Activated B cell treated with CpG ODN at 0.5 μM for 24 hours (primary cell): ENCODE measurements at regions of chr3 and their contacts with region 1.

Region 1: DNA sequence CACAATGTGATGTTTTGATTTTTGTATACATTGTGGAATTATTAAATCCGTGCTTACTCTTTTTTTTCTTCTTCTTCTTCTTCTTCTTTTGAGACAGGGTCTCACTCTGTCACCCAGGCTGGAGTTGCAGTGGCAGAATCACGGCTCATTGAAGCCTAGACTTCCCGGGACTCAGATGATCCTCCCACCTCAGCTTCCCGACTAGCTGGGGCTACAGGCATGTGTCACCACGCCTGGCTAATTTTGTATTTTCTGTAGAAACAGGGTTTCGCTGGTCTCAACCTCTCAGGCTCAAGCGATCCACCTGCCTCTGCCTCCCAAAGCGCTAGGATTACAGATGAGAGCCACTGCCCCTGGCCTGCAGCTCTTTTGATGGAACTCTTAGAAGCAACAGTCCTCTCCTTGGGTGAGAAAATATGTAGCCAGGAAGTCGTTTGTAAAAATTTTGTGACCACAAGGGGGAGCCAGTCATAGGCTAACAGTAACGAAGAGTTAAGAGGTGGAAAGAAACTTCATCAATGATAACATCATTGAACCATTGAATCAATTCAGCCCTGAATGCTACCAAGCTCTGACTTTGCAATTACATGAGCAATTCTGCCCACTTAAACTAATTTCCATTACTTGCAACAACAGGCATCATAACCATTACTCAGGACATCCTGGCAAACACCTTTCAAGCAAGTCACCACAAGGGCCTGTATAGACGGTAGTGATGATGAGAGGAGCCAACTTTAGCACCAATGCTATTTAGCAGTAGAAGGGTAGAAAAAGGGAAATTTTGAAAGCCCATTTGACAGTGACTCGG is 16.7 kb upstream of the CMTM7 start:
- DNase-seq: peak; percentile 18
- ATAC-seq: peak; percentile 75
- H3K4me3 Mint-ChIP-seq: no peak overlapping the region
- H3K27ac Mint-ChIP-seq: peak overlapping the region; percentile 50
- H3K4me1 Mint-ChIP-seq: peaks cover 28% of the 10 kb centered on the region
- H3K27me3 Mint-ChIP-seq: no peaks in the 10 kb centered on the region
- CTCF ChIP-seq: no peak

Region 2: DNA sequence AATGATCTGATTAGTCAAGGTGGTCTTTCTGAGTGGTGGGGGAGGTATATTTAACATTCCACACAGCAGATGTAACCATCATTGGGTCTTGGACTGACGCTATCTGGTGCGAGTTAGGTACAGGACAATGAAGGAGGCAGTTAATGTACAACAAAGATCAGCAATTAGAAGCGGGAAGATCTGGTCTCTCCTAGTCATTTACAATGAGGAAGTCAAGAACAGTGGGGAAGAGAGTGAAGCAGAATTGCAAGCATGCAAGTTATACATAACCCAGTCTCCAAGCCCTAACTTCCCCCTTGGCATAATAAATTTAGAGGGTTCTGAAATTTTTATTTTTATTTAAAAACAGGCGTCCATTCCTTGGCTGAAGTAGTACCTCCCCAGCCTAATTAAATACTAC is 254.5 kb before region 1 on chr3:
- CTCF ChIA-PET with region 1: no interaction called
- POLR2A ChIA-PET with region 1: no interaction called
- intact Hi-C with region 1: no loop called
- DNase-seq: no peak
- ATAC-seq: no peak
- H3K4me3 Mint-ChIP-seq: no peak overlapping the region
- H3K27ac Mint-ChIP-seq: no peak overlapping the region
- H3K4me1 Mint-ChIP-seq: peaks cover 2% of the 10 kb centered on the region
- H3K27me3 Mint-ChIP-seq: no peaks in the 10 kb centered on the region
- CTCF ChIP-seq: no peak

Region 3: DNA sequence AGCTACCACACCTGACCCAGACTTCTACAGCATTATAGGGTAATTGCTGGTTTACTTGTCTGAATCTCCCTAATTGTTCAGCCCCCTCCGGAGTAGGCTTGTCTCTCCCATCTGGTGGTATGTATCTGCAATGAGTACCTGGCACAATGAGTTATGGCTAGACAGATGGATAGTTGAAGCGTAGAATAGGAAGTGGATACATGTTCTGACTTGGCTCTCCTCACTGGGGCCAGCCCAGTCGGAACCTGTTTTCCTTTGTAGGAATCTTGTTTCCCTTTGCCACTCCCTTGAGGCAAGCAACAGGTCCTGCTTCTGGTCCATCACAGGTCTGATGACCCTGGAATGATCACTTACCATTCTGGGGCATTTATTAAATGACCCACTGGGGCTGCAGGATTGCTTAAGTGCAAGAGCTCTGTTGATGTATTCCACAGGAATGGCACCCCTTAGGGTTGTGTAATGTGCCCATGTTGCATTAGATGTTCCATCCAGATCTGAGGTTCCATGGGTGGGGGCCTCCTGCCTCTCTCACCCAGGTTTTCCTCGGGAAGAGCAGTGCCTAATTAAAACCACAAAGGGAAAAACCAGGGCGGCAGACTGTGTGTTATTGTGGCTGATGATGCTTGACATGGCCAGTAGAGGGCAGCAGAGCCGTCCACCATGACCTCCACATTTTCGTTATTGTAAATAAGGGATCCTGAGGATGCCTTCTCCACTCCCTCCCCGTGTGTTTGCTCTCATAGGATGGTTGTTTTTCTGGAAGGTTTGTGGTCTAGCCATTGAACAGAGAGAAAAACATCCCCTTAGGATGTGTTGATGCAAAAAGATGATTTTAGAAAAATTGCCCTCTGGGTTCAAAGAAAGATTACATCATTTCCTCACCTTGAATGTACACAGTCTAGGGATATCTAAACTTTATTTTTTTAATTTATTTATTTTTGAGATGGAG is 78.5 kb before region 1 on chr3:
- CTCF ChIA-PET with region 1: interaction called, 7 read pairs
- POLR2A ChIA-PET with region 1: interaction called, 3 read pairs
- intact Hi-C with region 1: loop called (anchors 5 kb)
- DNase-seq: peak; percentile 40
- ATAC-seq: peak; percentile 82
- H3K4me3 Mint-ChIP-seq: no peak overlapping the region
- H3K27ac Mint-ChIP-seq: no peak overlapping the region
- H3K4me1 Mint-ChIP-seq: peaks cover 4% of the 10 kb centered on the region
- H3K27me3 Mint-ChIP-seq: no peaks in the 10 kb centered on the region
- CTCF ChIP-seq: peak; percentile 88

Region 4: DNA sequence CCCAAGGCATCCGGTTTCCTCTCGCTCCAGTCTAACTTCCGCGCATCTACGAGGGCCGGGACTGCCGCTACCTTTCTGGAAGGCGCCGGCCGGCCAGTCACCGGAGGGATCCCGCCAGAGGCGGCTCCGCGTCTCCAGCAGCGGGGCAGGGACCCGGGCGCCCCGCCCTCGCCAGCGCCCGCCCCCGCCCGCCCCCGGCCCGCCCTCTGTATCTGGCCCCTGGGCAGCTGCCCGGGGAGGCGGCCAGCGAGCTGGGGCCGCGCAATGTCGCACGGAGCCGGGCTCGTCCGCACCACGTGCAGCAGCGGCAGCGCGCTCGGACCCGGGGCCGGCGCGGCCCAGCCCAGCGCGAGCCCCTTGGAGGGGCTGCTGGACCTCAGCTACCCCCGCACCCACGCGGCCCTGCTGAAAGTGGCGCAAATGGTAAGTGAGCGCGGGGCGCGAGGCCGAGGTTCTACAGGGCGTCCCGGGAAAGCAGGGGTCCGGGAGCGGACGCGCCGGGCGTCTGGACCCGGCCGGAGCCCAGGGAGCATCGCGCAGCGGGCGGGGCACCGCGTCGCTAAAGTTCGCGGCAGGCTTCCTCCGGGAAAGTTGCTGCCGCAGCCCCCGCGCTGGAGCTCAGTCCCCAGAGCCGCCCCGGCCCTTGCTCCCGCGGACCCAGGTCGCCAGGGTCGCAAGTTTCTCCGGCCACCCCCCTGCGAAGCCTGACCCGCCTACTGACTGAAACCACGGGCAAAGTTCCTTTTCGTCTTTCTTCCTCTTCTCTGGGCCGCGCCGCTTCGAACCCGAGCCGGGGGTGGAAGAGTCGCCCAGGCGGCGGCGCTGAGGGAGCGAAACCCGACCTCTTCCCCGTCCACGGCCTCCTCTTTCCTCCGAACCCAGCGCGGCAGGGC is 16.9 kb after region 1 on chr3 and contains the start of gene CMTM7:
- CTCF ChIA-PET with region 1: interaction called, 40 read pairs
- POLR2A ChIA-PET with region 1: interaction called, 10 read pairs
- intact Hi-C with region 1: loop called (anchors 1 kb)
- DNase-seq: peak; percentile 65
- ATAC-seq: peak; percentile 64
- H3K4me3 Mint-ChIP-seq: peak within 1 kb of the TSS; percentile 97
- H3K27ac Mint-ChIP-seq: peak within 1 kb of the TSS; percentile 90
- H3K4me1 Mint-ChIP-seq: peaks cover 56% of the 10 kb centered on the region
- H3K27me3 Mint-ChIP-seq: no peaks in the 10 kb centered on the region
- CTCF ChIP-seq: no peak
- total RNA-seq, gene CMTM7: 70.5 and 82.1 TPM in 2 replicates

Region 5: DNA sequence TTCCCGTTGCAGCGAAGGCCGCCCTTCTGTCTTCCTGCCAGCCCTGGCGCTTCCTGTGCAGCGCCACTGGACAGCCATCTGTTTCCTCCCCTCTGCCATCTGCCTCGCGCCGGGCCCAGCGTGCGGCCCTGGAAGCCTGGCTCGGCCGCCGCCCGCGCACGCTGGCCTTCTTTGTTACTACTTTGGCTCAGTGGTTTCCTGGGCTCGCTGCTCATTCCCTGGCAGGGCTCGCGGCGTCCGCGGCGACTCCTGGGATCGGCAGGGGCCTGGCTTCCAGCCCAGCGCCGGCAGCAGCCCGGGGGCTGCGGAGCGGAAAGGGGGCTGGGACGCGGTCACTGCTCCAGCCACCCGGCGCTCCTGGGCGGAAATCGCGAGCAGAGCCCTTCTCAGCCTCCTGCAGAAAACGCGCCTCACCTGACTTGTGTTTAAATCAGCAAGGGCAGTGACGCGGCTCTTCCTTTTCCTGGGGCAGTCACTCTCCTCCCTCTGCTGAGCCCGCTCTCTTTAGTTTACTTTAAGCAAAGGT is 26.6 kb after region 1 on chr3:
- CTCF ChIA-PET with region 1: interaction called, 40 read pairs
- POLR2A ChIA-PET with region 1: interaction called, 4 read pairs
- intact Hi-C with region 1: loop called (anchors 1 kb)
- DNase-seq: peak; percentile 45
- ATAC-seq: peak; percentile 71
- H3K4me3 Mint-ChIP-seq: peak overlapping the region; percentile 89
- H3K27ac Mint-ChIP-seq: peak overlapping the region; percentile 97
- H3K4me1 Mint-ChIP-seq: peaks cover 86% of the 10 kb centered on the region
- H3K27me3 Mint-ChIP-seq: no peaks in the 10 kb centered on the region
- CTCF ChIP-seq: no peak

Region 6: GRCh38 chr3:32420126-32421038 is 45.4 kb after region 1 on chr3:
- CTCF ChIA-PET with region 1: interaction called, 10 read pairs
- POLR2A ChIA-PET with region 1: no interaction called
- intact Hi-C with region 1: loop called (anchors 1 kb)
- DNase-seq: peak; percentile 51
- ATAC-seq: peak; percentile 81
- H3K4me3 Mint-ChIP-seq: peak overlapping the region; percentile 76
- H3K27ac Mint-ChIP-seq: peak overlapping the region; percentile 88
- H3K4me1 Mint-ChIP-seq: peaks cover 91% of the 10 kb centered on the region
- H3K27me3 Mint-ChIP-seq: no peaks in the 10 kb centered on the region
- CTCF ChIP-seq: no peak

Region 7: GRCh38 chr3:32502118-32502945 is 127.3 kb after region 1 on chr3 and contains the start of gene CMTM6:
- CTCF ChIA-PET with region 1: interaction called, 5 read pairs
- POLR2A ChIA-PET with region 1: interaction called, 3 read pairs
- intact Hi-C with region 1: loop called (anchors 1 kb)
- DNase-seq: peak; percentile 67
- ATAC-seq: peak; percentile 80
- H3K4me3 Mint-ChIP-seq: peak within 1 kb of the TSS; percentile 98
- H3K27ac Mint-ChIP-seq: peak within 1 kb of the TSS; percentile 90
- H3K4me1 Mint-ChIP-seq: peaks cover 41% of the 10 kb centered on the region
- H3K27me3 Mint-ChIP-seq: no peaks in the 10 kb centered on the region
- CTCF ChIP-seq: no peak
- total RNA-seq, gene CMTM6: 84.6 and 90.1 TPM in 2 replicates

Region 8: GRCh38 chr3:32667122-32667521 is 292.1 kb after region 1 on chr3:
- CTCF ChIA-PET with region 1: no interaction called
- POLR2A ChIA-PET with region 1: no interaction called
- intact Hi-C with region 1: loop called (anchors 1 kb)
- DNase-seq: no peak
- ATAC-seq: no peak
- H3K4me3 Mint-ChIP-seq: no peak overlapping the region
- H3K27ac Mint-ChIP-seq: no peak overlapping the region
- H3K4me1 Mint-ChIP-seq: no peaks in the 10 kb centered on the region
- H3K27me3 Mint-ChIP-seq: peaks cover 6% of the 10 kb centered on the region
- CTCF ChIP-seq: no peak